ENCODE measurements at regions of chr9 and their contacts with region 1.

Region 1: GRCh38 chr9:124415102-124415851 is at the start of gene PSMB7:
- DNase-seq: peak; percentile 93
- H3K4me3 ChIP-seq: peak within 1 kb of the TSS; percentile 60 to 82
- H3K27ac ChIP-seq: peak within 1 kb of the TSS in 1 of 2 donors; percentile 35
- H3K4me1 ChIP-seq: peaks cover 3% of the 10 kb centered on the region
- H3K27me3 ChIP-seq: no peaks in the 10 kb centered on the region
- CTCF ChIP-seq: peak in 3 of 4 experiments; percentile 76 to 84 (median 78)
- POLR2A ChIP-seq: no peak
- total RNA-seq, gene PSMB7: 150 to 158 TPM

Region 2: DNA sequence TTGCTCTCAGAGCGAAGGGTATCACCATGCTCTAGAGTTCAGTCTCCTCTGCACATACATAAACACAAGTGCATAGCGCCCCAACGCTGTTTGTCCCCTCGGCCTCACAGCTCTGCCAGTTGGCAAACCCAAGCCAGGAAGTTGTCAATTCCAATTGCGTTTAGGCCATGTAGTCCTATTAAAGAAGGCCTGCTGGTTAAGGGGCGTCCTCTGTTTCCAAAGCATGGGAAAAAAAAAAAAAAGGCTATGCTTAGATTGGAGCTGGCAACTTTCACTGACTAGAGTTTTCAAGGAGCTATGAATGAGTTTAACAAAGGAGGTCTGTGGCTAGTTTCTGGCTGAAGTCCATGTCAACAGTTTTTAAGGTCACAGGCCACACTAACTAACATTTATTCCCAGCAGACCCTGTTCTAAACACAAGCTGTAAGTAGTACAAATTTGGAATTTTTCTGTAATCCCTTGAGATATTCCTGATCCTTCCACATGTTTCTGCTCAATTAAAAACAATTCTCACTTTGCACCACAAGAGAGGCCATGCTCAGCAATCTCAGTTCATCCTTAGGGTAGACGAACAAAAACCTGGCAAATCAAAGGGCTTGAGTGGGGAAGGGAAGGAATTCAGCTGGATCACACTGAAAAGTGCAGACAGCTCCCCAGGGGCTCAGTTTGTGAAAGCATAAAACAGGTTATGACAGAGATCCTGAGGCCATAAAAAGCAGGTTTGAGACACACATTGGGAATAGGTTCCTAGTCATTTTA is 673.1 kb before region 1 on chr9:
- intact Hi-C with region 1: no loop called
- DNase-seq: no peak
- H3K4me3 ChIP-seq: no peak overlapping the region
- H3K27ac ChIP-seq: no peak overlapping the region
- H3K4me1 ChIP-seq: no peaks in the 10 kb centered on the region
- H3K27me3 ChIP-seq: no peaks in the 10 kb centered on the region
- CTCF ChIP-seq: no peak
- POLR2A ChIP-seq: no peak

Region 3: GRCh38 chr9:124285903-124286291 is 129.4 kb before region 1 on chr9:
- intact Hi-C with region 1: no loop called
- DNase-seq: no peak
- H3K4me3 ChIP-seq: no peak overlapping the region
- H3K27ac ChIP-seq: peak overlapping the region; percentile 72 to 74
- H3K4me1 ChIP-seq: peaks cover 14% of the 10 kb centered on the region
- H3K27me3 ChIP-seq: no peaks in the 10 kb centered on the region
- CTCF ChIP-seq: no peak
- POLR2A ChIP-seq: no peak

Region 4: GRCh38 chr9:124370896-124371582 is 44.2 kb before region 1 on chr9:
- intact Hi-C with region 1: no loop called
- DNase-seq: no peak
- H3K4me3 ChIP-seq: no peak overlapping the region
- H3K27ac ChIP-seq: no peak overlapping the region
- H3K4me1 ChIP-seq: no peaks in the 10 kb centered on the region
- H3K27me3 ChIP-seq: no peaks in the 10 kb centered on the region
- CTCF ChIP-seq: no peak
- POLR2A ChIP-seq: no peak

Region 5: DNA sequence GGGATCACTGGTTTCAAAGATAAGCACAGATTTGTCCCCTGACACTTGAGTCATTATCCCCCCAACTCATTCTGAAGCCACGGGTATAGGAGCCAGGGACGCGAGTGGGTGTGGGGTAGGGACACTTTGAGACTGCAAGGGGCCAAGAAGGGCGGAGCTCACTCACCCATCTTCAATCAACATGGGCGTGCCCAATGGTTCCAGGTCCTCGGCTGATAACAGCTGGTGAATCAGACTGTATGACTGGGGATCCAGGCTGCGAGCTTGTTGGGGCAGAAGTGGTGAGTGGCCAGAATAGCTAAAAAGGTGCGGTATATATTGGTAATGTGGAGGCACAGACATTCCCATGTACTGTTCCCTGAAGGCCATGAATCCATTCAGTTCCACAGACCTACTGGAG is 122.6 kb after region 1 on chr9:
- intact Hi-C with region 1: loop called (anchors 2 kb)
- DNase-seq: no peak
- H3K4me3 ChIP-seq: no peak overlapping the region
- H3K27ac ChIP-seq: no peak overlapping the region
- H3K4me1 ChIP-seq: no peaks in the 10 kb centered on the region
- H3K27me3 ChIP-seq: no peaks in the 10 kb centered on the region
- CTCF ChIP-seq: no peak
- POLR2A ChIP-seq: no peak